Activated T-helper 1 cell treated with anti-CD3 and anti-CD28 coated beads, Interleukin-12 subunit alpha, Interleukin-12 subunit beta, Interleukin-2, Interleukin-4 antibody, amounts not matched to agents 30 ng/mL and 10 ng/mL and 1 ng/mL, durations not matched to agents 14 hours and 24 hours and 36 hours (primary cell): ENCODE measurements at regions of chr17 and their contacts with region 1.

Region 1: DNA sequence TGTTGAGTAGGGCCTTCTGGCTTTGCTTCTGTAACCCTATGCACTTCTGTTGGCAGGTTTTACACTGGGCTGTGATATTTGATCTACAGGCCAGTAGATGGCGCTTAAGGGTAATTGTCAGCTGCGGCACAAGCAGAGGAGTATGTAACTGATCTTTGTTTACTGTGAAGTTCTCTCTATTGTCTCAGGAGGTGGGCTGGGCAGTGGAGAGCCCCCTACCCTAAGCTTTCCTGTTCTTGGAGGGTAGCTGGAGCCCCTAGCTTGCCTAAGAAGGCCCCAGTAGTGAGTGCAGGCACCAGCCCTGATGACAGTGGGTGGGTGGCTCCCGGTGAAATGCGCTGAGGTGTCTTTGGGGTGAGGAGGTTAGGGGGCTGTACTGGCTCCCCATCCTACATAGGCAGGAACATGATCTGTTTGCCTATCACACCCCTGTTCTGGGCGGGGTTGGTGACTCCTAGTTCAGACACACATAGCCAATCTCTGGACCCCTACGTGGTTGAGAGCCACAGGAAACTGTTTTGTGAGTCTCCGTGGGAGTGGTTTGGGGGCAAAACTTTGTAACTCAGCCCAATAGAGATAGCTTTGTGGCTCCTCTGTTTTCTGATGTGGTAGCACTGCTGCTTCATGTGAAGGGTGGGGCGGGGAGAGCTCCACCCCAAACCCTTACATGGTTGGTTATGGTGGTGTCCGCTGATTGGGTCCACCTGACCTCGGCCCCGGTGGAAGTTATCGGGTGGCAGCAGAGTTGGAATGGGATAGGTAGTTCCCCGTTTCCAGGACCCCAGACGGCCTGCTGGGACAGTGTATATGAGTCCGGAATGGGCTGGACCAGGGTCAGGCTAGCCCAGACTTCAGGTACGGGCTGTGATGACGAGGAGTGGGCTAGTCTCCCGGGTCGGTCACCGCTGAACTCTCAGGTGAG is 60.4 kb downstream of the SLFN11 start:
- DNase-seq: peak; percentile 78
- H3K4me3 Mint-ChIP-seq: peak overlapping the region; percentile 81
- H3K27ac Mint-ChIP-seq: peak overlapping the region; percentile 88
- H3K4me1 Mint-ChIP-seq: peaks cover 45% of the 10 kb centered on the region
- H3K27me3 Mint-ChIP-seq: peaks cover 2% of the 10 kb centered on the region

Region 2: DNA sequence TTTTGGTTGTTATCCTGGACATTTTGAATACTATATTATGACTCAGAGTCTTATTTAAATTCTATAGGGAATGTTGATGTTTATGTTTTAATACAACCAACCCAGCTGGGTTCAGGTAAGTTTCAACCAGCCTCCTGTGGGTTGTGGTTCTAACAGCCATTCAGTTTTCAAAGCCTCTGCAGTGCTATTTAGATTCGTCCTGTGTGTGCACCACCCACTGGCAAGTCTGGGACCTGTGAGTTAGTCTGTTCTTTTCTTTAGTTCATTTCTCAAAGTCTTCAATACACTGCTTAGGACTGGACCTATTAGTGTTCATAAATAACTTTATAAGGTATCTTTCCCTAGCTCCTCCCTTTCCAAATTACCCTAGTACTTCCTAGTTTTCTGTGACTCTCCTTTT is 563.0 kb before region 1 on chr17:
- intact Hi-C with region 1: no loop called
- DNase-seq: no peak
- H3K4me3 Mint-ChIP-seq: no peak overlapping the region
- H3K27ac Mint-ChIP-seq: no peak overlapping the region
- H3K4me1 Mint-ChIP-seq: no peaks in the 10 kb centered on the region
- H3K27me3 Mint-ChIP-seq: peaks cover 3% of the 10 kb centered on the region

Region 3: GRCh38 chr17:35170968-35171771 is 141.9 kb before region 1 on chr17:
- intact Hi-C with region 1: loop called (anchors 1 kb)
- DNase-seq: peak; percentile 15
- H3K4me3 Mint-ChIP-seq: peak overlapping the region; percentile 5
- H3K27ac Mint-ChIP-seq: no peak overlapping the region
- H3K4me1 Mint-ChIP-seq: peaks cover 35% of the 10 kb centered on the region
- H3K27me3 Mint-ChIP-seq: peaks cover 7% of the 10 kb centered on the region

Region 4: DNA sequence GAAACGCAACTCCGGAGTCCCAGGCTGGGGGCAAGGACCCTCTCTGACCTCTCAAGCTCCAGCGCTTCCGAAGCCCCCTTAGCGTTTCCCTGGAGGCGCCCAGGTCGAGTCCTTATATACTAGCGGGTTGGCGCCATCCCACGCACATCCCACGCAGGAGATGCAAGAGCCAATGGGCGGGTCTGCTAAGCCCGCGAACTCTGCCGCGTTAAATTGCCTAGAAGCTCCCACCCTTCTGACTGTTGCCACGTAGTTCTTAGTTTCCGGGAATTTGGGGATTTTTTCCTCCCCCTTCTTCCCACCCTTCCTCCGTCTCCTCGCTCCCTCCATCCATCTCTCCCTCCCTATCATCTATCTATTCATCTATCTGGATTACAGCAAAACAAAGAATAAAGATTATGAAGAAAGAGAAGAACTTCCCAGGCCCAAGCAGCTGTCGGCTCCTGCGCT is 60.5 kb after region 1 on chr17 and contains the start of gene SLFN11:
- intact Hi-C with region 1: loop called (anchors 1 kb)
- DNase-seq: peak; percentile 79
- H3K4me3 Mint-ChIP-seq: peak within 1 kb of the TSS; percentile 93
- H3K27ac Mint-ChIP-seq: peak within 1 kb of the TSS; percentile 95
- H3K4me1 Mint-ChIP-seq: peaks cover 66% of the 10 kb centered on the region
- H3K27me3 Mint-ChIP-seq: no peaks in the 10 kb centered on the region
- total RNA-seq, gene SLFN11: 70.8 and 76.0 TPM in 2 replicates

Region 5: DNA sequence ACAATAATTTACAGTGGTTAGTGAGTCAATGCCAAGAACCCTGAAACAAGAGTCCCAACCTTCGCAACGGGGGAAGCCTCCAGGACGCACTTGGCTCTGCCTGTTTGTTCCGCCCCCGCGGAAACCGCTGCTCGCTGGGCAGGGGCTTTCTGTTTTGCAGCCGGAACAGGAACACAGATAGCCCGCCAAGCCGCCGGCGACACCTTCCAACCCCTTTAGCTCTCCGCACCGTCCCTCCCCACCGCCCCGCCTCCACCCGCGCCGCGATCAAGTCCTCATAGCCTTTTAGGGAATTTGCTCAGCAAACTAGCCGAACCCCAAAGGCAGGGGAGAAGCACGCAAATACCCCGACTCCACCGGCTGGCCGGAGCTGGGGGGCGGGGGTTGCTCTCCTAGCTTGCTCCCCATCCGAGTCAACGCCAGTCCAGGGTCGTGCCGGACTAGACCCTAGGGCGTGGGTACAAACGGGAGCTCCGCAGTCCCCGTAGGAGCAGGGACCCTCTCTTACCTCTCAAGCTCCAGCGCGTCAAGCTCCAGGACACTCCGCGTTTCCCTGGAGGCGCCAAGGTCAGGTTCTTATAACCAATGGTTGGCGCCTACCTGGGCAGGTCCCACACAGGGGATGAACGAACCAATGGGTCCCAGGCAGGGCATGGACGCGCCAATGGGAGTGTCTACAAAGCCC is 135.3 kb after region 1 on chr17 and contains the start of gene SLFN13:
- intact Hi-C with region 1: loop called (anchors 1 kb)
- DNase-seq: peak; percentile 84
- H3K4me3 Mint-ChIP-seq: peak within 1 kb of the TSS; percentile 67
- H3K27ac Mint-ChIP-seq: peak within 1 kb of the TSS; percentile 66
- H3K4me1 Mint-ChIP-seq: peaks cover 27% of the 10 kb centered on the region
- H3K27me3 Mint-ChIP-seq: no peaks in the 10 kb centered on the region
- total RNA-seq, gene SLFN13: 32.2 and 32.7 TPM in 2 replicates

Region 6: GRCh38 chr17:35587074-35587971 is 274.3 kb after region 1 on chr17 and contains the start of gene AP2B1:
- intact Hi-C with region 1: loop called (anchors 1 kb)
- DNase-seq: peak; percentile 96
- H3K4me3 Mint-ChIP-seq: peak within 1 kb of the TSS; percentile 94
- H3K27ac Mint-ChIP-seq: peak within 1 kb of the TSS; percentile 96
- H3K4me1 Mint-ChIP-seq: peaks cover 38% of the 10 kb centered on the region
- H3K27me3 Mint-ChIP-seq: peaks cover 3% of the 10 kb centered on the region
- total RNA-seq, gene AP2B1: 156 and 167 TPM in 2 replicates